ENCODE measurements at regions of chr2 and their contacts with region 1.

Region 1: GRCh38 chr2:99154643-99155536 is at the starts of genes LIPT1 and TSGA10:
- DNase-seq: peak; percentile 74 to 95
- H3K4me3 ChIP-seq: peak within 1 kb of the TSS; percentile 72 to 73
- H3K27ac ChIP-seq: peak within 1 kb of the TSS; percentile 83 to 84
- H3K4me1 ChIP-seq: peaks cover 0 to 13% of the 10 kb centered on the region in 2 donors
- H3K27me3 ChIP-seq: no peaks in the 10 kb centered on the region
- CTCF ChIP-seq: peak in 1 of 3 experiments; percentile 10
- total RNA-seq, gene LIPT1: not detected
- total RNA-seq, gene TSGA10: not detected

Region 2: DNA sequence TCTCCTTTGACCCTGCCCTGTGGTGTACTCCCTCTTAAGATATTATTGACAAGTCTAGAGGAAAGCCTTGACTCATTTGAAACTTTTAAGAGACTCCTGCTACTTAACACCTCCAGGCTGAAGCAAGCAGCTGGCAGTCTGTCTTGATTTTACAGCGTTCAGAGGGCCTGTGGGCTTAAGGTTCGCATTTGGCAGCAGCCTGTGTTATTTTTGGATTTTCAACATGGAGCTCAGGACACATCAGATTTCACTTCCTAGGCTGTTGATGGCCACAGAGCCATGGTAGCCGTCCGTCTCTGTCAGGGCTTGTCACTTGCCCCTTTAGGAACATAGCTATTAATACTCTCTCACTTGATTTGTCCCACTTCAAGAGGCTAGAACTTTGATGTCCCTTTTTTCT is 994.3 kb before region 1 on chr2:
- intact Hi-C with region 1: loop called (anchors 10 kb)
- DNase-seq: peak in 1 of 2 donors; percentile 69
- H3K4me3 ChIP-seq: no peak overlapping the region
- H3K27ac ChIP-seq: peak overlapping the region; percentile 79 to 83
- H3K4me1 ChIP-seq: peaks cover 31 to 44% of the 10 kb centered on the region in 2 donors
- H3K27me3 ChIP-seq: no peaks in the 10 kb centered on the region
- CTCF ChIP-seq: no peak

Region 3: GRCh38 chr2:99141110-99142108 is 13.5 kb before region 1 on chr2 and contains the start of gene C2orf15:
- intact Hi-C with region 1: loop called (anchors 1 kb)
- DNase-seq: peak; percentile 74 to 96
- H3K4me3 ChIP-seq: peak within 1 kb of the TSS; percentile 80 to 95
- H3K27ac ChIP-seq: peak within 1 kb of the TSS; percentile 71 to 86
- H3K4me1 ChIP-seq: peaks cover 0 to 4% of the 10 kb centered on the region in 2 donors
- H3K27me3 ChIP-seq: no peaks in the 10 kb centered on the region
- CTCF ChIP-seq: no peak
- total RNA-seq, gene C2orf15: 0.32 TPM

Region 4: DNA sequence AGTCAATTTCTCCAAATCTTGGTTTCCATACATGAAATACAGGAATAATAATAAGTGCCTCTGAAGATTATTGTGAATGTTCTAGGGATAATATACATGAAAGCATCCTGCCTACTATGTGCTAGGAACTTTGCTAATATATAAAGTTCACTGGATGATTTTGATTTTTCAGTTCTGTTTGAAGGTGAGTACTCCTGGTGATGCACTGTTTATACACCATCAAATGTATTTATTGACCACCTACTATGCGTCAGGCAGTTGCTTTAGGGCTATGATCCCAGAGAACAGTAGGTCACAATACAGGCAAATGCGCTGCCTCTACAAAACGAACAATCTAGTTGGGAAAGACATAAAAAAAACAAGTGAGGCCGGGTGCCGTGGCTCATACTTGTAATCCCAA is 170.5 kb after region 1 on chr2:
- intact Hi-C with region 1: no loop called
- DNase-seq: no peak
- H3K4me3 ChIP-seq: no peak overlapping the region
- H3K27ac ChIP-seq: peak overlapping the region in 1 of 2 donors; percentile 1
- H3K4me1 ChIP-seq: peaks cover 0 to 3% of the 10 kb centered on the region in 2 donors
- H3K27me3 ChIP-seq: no peaks in the 10 kb centered on the region
- CTCF ChIP-seq: no peak

Region 5: DNA sequence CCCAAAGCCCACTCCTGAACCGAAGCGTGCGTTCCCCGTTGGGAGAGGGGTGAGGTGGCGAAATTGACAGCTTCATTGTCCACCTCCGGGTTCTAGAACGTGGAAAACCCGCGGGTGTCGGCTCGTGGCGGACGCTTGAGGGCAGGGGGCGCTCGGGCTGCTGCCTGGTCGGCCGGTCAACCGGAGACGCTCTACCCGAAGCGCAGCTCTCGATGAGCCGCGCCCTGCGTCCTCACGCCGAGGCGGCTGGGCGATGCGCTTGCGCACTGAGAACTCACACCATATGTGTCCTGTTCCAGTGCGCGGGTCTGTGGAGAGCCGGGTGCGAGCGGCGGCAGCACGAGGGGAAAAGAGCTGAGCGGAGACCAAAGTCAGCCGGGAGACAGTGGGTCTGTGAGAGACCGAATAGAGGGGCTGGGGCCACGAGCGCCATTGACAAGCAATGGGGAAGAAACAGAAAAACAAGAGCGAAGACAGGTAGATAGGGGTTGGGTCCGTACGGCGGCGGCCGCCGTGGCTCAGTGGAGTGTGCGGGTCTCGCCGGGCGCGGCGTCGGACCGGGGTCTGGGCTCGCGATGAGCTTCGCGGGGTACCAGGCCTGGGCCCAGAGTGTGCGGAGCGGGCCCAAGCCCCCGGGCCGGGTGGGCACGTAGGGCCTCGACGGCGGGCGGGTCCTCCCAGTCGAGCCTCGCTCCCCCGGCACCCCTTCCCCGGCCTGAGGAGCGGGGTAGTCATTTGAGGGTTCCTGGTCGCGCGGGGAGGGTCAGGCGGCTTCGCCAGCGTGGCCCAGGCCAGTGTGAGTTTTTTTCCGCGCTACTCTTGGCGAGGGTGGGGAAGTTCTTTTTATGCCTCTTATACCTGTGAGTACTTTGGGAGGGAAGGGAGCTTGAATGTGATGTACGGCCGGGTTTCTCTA is 182.5 kb after region 1 on chr2 and contains the start of gene EIF5B:
- intact Hi-C with region 1: loop called (anchors 1 kb)
- DNase-seq: peak; percentile 86 to 98
- H3K4me3 ChIP-seq: peak within 1 kb of the TSS; percentile 72 to 82
- H3K27ac ChIP-seq: peak within 1 kb of the TSS; percentile 86 to 96
- H3K4me1 ChIP-seq: peaks cover 6 to 11% of the 10 kb centered on the region in 2 donors
- H3K27me3 ChIP-seq: no peaks in the 10 kb centered on the region
- CTCF ChIP-seq: peak; percentile 17 to 83 (median 79)
- total RNA-seq, gene EIF5B: 38.2 TPM